B cell (primary cell): ENCODE measurements at regions of chr6 and their contacts with region 1.

Region 1: DNA sequence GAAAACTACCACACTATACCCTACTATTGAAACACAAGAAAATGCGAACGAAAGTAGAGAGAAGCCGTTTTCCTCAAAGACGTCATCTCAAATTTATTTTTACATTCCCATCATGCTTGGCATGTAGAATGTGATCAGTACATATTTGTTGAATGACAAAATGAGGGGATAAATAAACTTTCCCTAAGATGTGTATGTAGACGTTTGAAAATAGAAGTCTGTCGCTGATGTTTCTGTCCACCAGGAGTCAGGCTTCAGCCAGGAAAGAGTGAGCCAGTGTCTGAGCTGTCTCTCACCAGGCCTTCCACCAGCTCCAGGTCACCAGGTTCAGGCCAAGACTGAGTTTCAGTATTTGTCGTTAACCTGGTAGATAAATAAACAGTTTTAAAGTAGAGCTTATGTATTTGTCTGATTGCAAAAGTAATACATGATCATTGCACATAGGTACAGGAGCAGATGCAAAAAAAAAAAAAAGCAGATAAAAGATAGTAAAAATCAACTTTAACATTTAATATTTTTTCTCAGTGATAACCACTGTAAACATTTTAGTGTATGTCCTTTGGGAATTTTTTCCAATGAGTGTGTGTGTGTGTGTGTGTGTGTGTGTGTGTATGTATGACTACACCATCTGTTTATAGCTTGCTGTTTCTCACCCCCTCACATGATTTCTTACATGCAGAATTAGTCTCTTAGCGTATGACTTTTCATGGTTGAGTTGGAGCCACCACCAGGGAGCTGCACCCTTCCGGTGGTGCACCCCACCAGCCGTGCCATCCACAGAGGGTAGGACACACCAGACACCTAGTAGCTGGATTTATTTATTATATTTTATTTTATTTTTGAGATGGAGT is 26.2 kb downstream of the WRNIP1 start:
- DNase-seq: peak; percentile 78
- ATAC-seq: peak; percentile 83
- H3K4me3 ChIP-seq: no peak overlapping the region
- H3K4me3 Mint-ChIP-seq: peak overlapping the region; percentile 67
- H3K27ac ChIP-seq: peak overlapping the region in 1 of 2 donors; percentile 18
- H3K27ac Mint-ChIP-seq: peak overlapping the region; percentile 82
- H3K4me1 ChIP-seq: peaks cover 30 to 35% of the 10 kb centered on the region in 2 donors
- H3K4me1 Mint-ChIP-seq: peaks cover 36% of the 10 kb centered on the region
- H3K27me3 ChIP-seq: no peaks in the 10 kb centered on the region
- H3K27me3 Mint-ChIP-seq: no peaks in the 10 kb centered on the region
- CTCF ChIP-seq: peak; percentile 82

Region 2: GRCh38 chr6:2714111-2714895 is 77.0 kb before region 1 on chr6:
- CTCF ChIA-PET with region 1: no interaction called
- POLR2A ChIA-PET with region 1: no interaction called
- intact Hi-C with region 1: no loop called
- DNase-seq: no peak
- ATAC-seq: no peak
- H3K4me3 ChIP-seq: no peak overlapping the region
- H3K4me3 Mint-ChIP-seq: no peak overlapping the region
- H3K27ac ChIP-seq: no peak overlapping the region
- H3K27ac Mint-ChIP-seq: no peak overlapping the region
- H3K4me1 ChIP-seq: no peaks in the 10 kb centered on the region
- H3K4me1 Mint-ChIP-seq: peaks cover 6% of the 10 kb centered on the region
- H3K27me3 ChIP-seq: no peaks in the 10 kb centered on the region
- H3K27me3 Mint-ChIP-seq: peaks cover 2% of the 10 kb centered on the region
- CTCF ChIP-seq: no peak

Region 3: GRCh38 chr6:2765166-2765895 is 26.0 kb before region 1 on chr6 and contains the start of gene WRNIP1:
- CTCF ChIA-PET with region 1: interaction called, 18 read pairs
- POLR2A ChIA-PET with region 1: no interaction called
- intact Hi-C with region 1: loop called (anchors 2 kb)
- DNase-seq: peak; percentile 98
- ATAC-seq: peak; percentile 87
- H3K4me3 ChIP-seq: peak within 1 kb of the TSS; percentile 66 to 90 (median 77)
- H3K4me3 Mint-ChIP-seq: peak within 1 kb of the TSS; percentile 98
- H3K27ac ChIP-seq: peak within 1 kb of the TSS; percentile 96 to 97
- H3K27ac Mint-ChIP-seq: peak within 1 kb of the TSS; percentile 100
- H3K4me1 ChIP-seq: peaks cover 25 to 33% of the 10 kb centered on the region in 2 donors
- H3K4me1 Mint-ChIP-seq: peaks cover 43% of the 10 kb centered on the region
- H3K27me3 ChIP-seq: no peaks in the 10 kb centered on the region
- H3K27me3 Mint-ChIP-seq: no peaks in the 10 kb centered on the region
- CTCF ChIP-seq: peak; percentile 60
- total RNA-seq, gene WRNIP1: 32.1 and 35.2 TPM in 2 replicates

Region 4: DNA sequence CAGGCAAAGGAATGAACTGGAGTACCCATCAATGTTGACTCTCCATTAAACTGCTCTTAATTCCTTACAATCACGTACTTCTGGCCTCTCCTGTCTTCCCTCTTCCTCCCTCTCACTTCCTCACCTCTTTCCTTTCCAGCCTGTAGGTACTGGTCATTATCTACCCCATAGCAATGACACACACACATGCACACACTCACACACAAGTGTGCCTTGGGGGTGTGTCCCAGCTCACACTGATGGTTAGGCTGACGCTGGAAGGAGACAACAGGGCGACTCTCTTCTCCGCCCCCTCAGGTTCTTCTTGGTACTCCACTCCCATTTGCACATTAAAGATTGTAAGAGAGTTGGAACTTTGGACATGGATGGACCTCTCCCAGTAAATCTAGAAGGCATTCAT is 125.7 kb after region 1 on chr6:
- CTCF ChIA-PET with region 1: interaction called, 32 read pairs
- POLR2A ChIA-PET with region 1: interaction called, 3 read pairs
- intact Hi-C with region 1: no loop called
- DNase-seq: no peak
- ATAC-seq: peak; percentile 56
- H3K4me3 ChIP-seq: no peak overlapping the region
- H3K4me3 Mint-ChIP-seq: no peak overlapping the region
- H3K27ac ChIP-seq: no peak overlapping the region
- H3K27ac Mint-ChIP-seq: no peak overlapping the region
- H3K4me1 ChIP-seq: no peaks in the 10 kb centered on the region
- H3K4me1 Mint-ChIP-seq: peaks cover 2% of the 10 kb centered on the region
- H3K27me3 ChIP-seq: no peaks in the 10 kb centered on the region
- H3K27me3 Mint-ChIP-seq: no peaks in the 10 kb centered on the region
- CTCF ChIP-seq: peak; percentile 45

Region 5: GRCh38 chr6:2952557-2953095 is 161.3 kb after region 1 on chr6:
- CTCF ChIA-PET with region 1: interaction called, 14 read pairs
- POLR2A ChIA-PET with region 1: no interaction called
- intact Hi-C with region 1: no loop called
- DNase-seq: peak; percentile 69
- ATAC-seq: peak; percentile 97
- H3K4me3 ChIP-seq: peak overlapping the region in 1 of 5 experiments; percentile 15
- H3K4me3 Mint-ChIP-seq: peak overlapping the region; percentile 71
- H3K27ac ChIP-seq: no peak overlapping the region
- H3K27ac Mint-ChIP-seq: no peak overlapping the region
- H3K4me1 ChIP-seq: peaks cover 0 to 17% of the 10 kb centered on the region in 2 donors
- H3K4me1 Mint-ChIP-seq: peaks cover 12% of the 10 kb centered on the region
- H3K27me3 ChIP-seq: no peaks in the 10 kb centered on the region
- H3K27me3 Mint-ChIP-seq: no peaks in the 10 kb centered on the region
- CTCF ChIP-seq: peak; percentile 90

Region 6: DNA sequence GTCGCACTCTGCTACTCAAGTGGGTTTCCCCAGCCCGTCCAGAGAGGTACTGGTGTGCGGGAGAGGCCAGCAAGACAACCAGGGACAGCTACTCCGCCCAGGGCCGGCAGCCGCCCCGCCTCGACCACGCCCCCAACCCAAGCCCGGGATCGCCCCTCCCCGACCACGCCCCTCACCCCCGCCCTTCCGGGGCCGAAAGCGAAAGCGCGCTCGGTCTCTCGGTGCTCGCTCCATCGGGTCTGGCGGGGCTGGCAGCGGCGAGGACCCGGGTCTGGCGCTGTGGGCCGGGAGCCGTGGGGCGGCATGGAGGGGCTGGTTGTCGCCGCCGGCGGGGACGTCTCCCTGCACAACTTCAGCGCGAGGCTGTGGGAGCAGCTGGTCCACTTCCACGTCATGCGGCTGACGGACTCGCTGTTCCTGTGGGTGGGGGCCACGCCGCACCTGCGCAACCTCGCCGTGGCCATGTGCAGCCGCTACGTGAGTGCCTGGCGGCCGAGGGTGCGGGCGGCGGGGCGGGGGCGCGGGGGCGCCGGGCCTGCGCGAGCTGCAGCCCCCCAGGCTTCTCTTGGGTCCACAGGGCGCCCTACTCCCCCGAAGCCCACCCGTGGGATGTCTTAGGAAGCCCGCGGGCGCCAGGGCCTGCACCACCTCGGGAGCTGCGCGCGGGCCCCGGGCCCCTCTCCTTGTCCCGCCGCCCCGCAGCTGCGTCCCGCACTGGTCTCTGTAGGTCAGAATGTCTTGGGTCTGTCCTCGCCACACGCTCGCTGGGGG is 467.6 kb after region 1 on chr6 and contains the start of gene PSMG4:
- CTCF ChIA-PET with region 1: no interaction called
- POLR2A ChIA-PET with region 1: no interaction called
- intact Hi-C with region 1: no loop called
- DNase-seq: peak; percentile 92
- ATAC-seq: peak; percentile 92
- H3K4me3 ChIP-seq: peak within 1 kb of the TSS; percentile 65 to 86 (median 78)
- H3K4me3 Mint-ChIP-seq: peak within 1 kb of the TSS; percentile 97
- H3K27ac ChIP-seq: peak within 1 kb of the TSS; percentile 12 to 65
- H3K27ac Mint-ChIP-seq: peak within 1 kb of the TSS; percentile 91
- H3K4me1 ChIP-seq: peaks cover 20 to 34% of the 10 kb centered on the region in 2 donors
- H3K4me1 Mint-ChIP-seq: peaks cover 35% of the 10 kb centered on the region
- H3K27me3 ChIP-seq: no peaks in the 10 kb centered on the region
- H3K27me3 Mint-ChIP-seq: peaks cover 3% of the 10 kb centered on the region
- CTCF ChIP-seq: no peak
- total RNA-seq, gene PSMG4: 31.8 and 31.9 TPM in 2 replicates